Activated naive CD4-positive, alpha-beta T cell treated with anti-CD3 and anti-CD28 coated beads, Interleukin-2, amount 10 ng/mL, durations not matched to agents 7 days and 5 days (primary cell): ENCODE measurements at regions of chr3 and their contacts with region 1.

Region 1: GRCh38 chr3:185558395-185558794 is 6.0 kb upstream of the LIPH start:
- DNase-seq: no peak
- H3K4me3 Mint-ChIP-seq: no peak overlapping the region
- H3K27ac Mint-ChIP-seq: no peak overlapping the region
- H3K4me1 Mint-ChIP-seq: peaks cover 18% of the 10 kb centered on the region
- H3K27me3 Mint-ChIP-seq: peaks cover 20% of the 10 kb centered on the region

Region 2: GRCh38 chr3:185353823-185354614 is 204.4 kb before region 1 on chr3:
- CTCF ChIA-PET with region 1: interaction called, 11 read pairs
- DNase-seq: peak; percentile 86
- H3K4me3 Mint-ChIP-seq: no peak overlapping the region
- H3K27ac Mint-ChIP-seq: no peak overlapping the region
- H3K4me1 Mint-ChIP-seq: no peaks in the 10 kb centered on the region
- H3K27me3 Mint-ChIP-seq: peaks cover 33% of the 10 kb centered on the region

Region 3: GRCh38 chr3:185371306-185372074 is 186.9 kb before region 1 on chr3:
- CTCF ChIA-PET with region 1: no interaction called
- DNase-seq: no peak
- H3K4me3 Mint-ChIP-seq: no peak overlapping the region
- H3K27ac Mint-ChIP-seq: no peak overlapping the region
- H3K4me1 Mint-ChIP-seq: no peaks in the 10 kb centered on the region
- H3K27me3 Mint-ChIP-seq: peaks cover 25% of the 10 kb centered on the region

Region 4: DNA sequence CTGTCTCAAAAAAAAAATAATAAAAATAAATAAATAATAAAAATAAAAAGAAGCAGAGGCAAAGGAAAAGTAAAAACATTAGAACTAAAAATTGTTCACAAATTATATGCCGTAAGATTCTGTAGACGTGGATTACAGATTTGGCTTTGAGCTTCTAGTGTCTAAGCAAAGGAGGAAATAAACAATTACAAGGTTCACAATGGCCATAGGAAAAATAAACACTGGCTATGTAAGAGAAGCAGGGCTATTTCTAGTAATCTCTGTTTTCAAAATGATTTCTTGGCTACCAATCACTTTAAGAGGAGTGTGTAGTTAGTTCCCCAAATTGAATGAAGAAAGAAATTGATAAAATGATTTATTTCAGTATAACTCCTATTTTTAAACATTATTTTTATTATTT is 114.1 kb before region 1 on chr3:
- CTCF ChIA-PET with region 1: no interaction called
- DNase-seq: no peak
- H3K4me3 Mint-ChIP-seq: no peak overlapping the region
- H3K27ac Mint-ChIP-seq: no peak overlapping the region
- H3K4me1 Mint-ChIP-seq: no peaks in the 10 kb centered on the region
- H3K27me3 Mint-ChIP-seq: no peaks in the 10 kb centered on the region

Region 5: DNA sequence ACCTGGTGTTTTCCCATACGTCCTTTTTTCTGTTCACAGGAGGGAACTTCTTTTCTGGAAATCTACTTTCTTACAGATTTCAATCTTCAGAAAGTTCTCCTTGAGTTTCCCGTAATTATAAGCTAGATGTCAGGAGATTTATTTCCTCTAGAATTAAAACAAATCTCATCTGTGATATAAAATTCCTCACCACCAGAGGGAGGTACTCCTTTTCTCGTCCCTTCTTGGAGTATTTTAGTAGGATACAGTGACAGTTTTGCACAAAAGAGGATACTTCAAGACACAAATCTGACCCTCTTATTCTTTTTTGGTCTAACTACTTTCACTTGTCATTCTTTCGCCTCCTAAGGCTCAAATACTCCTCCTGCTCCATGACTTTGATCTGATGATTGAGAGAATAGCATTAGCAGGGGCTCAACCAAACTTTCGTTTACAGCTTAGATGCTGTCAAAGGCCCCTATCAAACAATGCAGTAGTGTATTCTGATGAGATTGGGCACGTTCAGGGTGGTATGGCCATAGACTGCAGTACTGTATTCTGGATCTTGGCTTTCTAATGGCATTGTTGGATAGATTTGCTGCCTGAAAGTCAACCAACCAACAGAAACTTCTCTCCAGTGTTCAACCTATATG is 97.6 kb before region 1 on chr3:
- CTCF ChIA-PET with region 1: interaction called, 17 read pairs
- DNase-seq: no peak
- H3K4me3 Mint-ChIP-seq: no peak overlapping the region
- H3K27ac Mint-ChIP-seq: no peak overlapping the region
- H3K4me1 Mint-ChIP-seq: no peaks in the 10 kb centered on the region
- H3K27me3 Mint-ChIP-seq: no peaks in the 10 kb centered on the region

Region 6: DNA sequence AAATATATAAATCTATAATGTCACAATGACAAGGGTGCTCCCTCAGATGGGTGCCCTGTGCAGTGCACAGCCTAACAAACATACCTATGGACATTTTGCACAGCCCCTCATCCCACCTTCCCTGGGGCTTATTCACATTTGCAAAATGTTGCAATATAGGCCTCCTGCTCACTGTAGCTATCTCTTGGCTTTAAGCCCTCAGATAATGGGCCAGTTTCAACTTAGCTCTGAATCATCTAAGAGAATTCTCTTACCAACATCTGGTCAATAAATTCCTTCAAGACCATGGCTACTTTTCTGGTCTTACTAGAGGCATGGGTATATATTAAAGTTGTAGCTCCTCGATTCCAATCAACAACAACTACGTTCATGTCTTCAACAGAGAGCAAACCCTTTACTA is 23.9 kb before region 1 on chr3:
- CTCF ChIA-PET with region 1: interaction called, 16 read pairs
- DNase-seq: no peak
- H3K4me3 Mint-ChIP-seq: no peak overlapping the region
- H3K27ac Mint-ChIP-seq: no peak overlapping the region
- H3K4me1 Mint-ChIP-seq: peaks cover 14% of the 10 kb centered on the region
- H3K27me3 Mint-ChIP-seq: peaks cover 5% of the 10 kb centered on the region